ENCODE measurements at regions of chr20 and their contacts with region 1.

Region 1: GRCh38 chr20:62386383-62387218 is at the start of gene RPS21:
- DNase-seq: peak; percentile 98
- H3K4me3 Mint-ChIP-seq: peak within 1 kb of the TSS; percentile 96
- H3K27ac Mint-ChIP-seq: peak within 1 kb of the TSS; percentile 92
- H3K4me1 Mint-ChIP-seq: peaks cover 63% of the 10 kb centered on the region
- H3K27me3 Mint-ChIP-seq: no peaks in the 10 kb centered on the region
- CTCF ChIP-seq: no peak
- total RNA-seq, gene RPS21: 1,920 and 1,936 TPM in 2 replicates

Region 2: DNA sequence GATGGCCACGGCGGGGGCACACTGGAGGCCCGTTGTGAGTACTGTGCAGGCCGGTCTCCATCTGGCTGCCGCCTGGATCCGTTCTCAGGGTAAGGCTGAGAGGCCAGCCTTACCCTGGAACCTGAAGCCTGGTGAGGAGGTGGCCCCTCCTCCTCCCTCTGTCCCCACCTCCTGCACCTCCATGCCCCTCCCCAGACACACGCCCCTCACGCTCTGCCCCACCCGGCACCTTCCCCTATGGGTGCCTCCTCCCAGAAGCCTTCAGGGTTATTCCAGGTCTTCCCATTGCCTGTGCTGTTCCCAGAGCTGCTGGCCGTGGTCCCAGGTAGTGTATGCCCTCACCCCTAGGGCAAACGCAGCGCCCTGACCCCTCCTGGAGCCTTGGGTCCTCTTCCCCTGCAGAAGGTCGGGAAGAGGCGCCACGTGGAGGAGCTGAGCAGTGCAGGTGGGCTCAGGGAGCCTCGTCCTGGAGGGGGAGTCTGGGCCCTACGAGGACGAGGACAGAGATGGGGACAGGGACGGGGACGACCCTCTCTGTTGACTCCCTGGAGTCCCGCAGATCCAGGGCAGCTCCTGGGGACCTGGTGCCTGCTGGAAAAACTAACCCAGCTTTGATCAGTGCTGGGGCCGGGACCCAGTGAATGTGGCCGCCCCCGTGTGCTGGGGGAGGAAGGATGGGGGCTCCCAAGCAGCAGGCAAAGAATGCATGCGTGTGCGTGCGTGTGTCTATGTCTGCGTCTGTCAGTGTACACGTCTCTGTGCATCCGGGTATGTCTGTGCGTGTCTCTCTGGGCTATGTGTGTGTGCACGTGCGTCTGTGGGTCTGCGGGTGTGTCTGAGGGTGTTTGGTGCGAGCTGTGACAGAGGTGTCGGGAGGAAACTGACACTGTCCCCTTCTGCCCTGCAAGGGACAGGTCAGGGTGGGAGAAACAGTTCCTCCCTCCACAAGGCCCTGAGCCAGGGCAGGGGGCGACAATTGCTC is 158.3 kb before region 1 on chr20:
- CTCF ChIA-PET with region 1: no interaction called
- intact Hi-C with region 1: no loop called
- DNase-seq: peak; percentile 43
- H3K4me3 Mint-ChIP-seq: no peak overlapping the region
- H3K27ac Mint-ChIP-seq: no peak overlapping the region
- H3K4me1 Mint-ChIP-seq: peaks cover 15% of the 10 kb centered on the region
- H3K27me3 Mint-ChIP-seq: peaks cover 44% of the 10 kb centered on the region
- CTCF ChIP-seq: peak; percentile 27

Region 3: GRCh38 chr20:62302341-62303058 is 84.1 kb before region 1 on chr20 and contains the start of gene ADRM1:
- CTCF ChIA-PET with region 1: interaction called, 44 read pairs
- intact Hi-C with region 1: loop called (anchors 1 kb)
- DNase-seq: peak; percentile 100
- H3K4me3 Mint-ChIP-seq: peak within 1 kb of the TSS; percentile 84
- H3K27ac Mint-ChIP-seq: peak within 1 kb of the TSS; percentile 86
- H3K4me1 Mint-ChIP-seq: peaks cover 28% of the 10 kb centered on the region
- H3K27me3 Mint-ChIP-seq: no peaks in the 10 kb centered on the region
- CTCF ChIP-seq: peak; percentile 98
- total RNA-seq, gene ADRM1: 222 and 227 TPM in 2 replicates

Region 4: DNA sequence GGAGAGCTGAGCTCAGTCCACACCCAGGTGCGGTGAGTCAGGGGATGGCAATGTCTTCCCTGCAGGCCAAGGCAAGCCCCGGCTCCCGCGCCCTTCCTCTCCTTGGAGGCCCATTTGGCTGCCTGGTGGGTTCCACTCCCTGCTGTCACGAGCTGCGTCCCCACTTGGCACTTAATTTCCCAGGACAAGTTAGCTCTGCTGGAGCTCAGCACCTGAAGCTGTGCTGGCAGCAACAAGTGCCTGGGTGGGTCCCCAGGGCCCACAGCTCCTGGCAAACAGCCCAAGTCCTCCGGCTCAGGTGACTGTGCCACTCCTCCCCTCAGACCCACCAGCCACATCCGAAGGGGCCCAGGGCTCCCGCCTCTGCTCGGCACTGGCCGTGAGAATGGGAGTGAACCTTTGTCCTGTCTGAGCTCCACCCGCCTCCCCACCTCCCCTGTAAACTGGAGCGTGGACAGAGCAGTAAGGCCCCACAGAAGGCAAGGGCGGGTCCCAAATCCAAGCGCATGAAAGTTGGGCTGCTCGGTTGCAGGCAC is 36.4 kb before region 1 on chr20:
- CTCF ChIA-PET with region 1: interaction called, 20 read pairs
- intact Hi-C with region 1: no loop called
- DNase-seq: peak; percentile 98
- H3K4me3 Mint-ChIP-seq: peak overlapping the region; percentile 60
- H3K27ac Mint-ChIP-seq: peak overlapping the region; percentile 93
- H3K4me1 Mint-ChIP-seq: peaks cover 33% of the 10 kb centered on the region
- H3K27me3 Mint-ChIP-seq: no peaks in the 10 kb centered on the region
- CTCF ChIP-seq: no peak

Region 5: DNA sequence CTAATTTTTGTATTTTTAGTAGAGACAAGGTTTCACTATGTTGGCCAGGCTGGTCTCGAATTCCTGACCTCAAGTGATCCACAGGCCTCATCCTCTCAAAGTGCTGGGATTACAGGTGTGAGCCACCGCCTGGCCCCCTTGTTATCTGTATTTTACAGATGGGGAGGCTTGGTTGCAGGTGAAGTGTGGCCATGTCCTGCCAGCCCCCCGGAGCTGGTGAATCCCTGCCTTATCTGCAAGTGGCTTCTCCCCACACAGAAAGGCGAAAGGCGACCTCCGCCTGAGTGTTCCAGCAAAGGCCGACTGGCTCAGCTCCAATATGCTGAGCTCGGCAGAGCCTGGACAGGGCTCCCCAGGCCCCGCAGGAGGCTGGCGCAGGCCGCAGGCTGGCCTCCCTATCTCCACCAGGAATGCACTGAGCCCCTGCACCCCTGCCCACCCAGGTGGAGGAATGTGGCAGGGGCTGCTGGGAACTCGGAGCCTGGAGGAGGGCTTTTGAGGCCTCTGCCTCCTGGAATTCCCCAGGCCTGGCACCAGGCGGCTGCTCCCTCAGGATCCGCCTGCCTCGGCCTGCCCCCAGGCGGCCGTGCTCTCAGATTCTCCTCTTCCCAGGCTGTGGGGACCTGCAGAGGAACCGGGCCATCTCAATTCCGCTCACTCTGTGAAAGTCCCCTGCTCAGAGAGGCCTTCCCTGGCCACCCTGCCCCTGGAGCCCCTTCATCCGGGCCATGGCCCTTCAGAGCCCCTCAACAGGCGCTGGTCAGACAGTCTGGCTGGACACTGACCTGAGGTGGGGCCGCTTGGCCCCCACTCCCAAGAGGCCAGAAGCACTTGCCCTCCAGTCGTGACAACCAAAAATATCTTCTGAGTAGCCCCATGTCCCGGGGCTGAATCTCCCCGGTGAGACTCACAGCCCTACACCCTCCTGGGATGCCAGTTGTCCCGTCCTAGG is 10.2 kb before region 1 on chr20:
- CTCF ChIA-PET with region 1: interaction called, 22 read pairs
- intact Hi-C with region 1: no loop called
- DNase-seq: peak; percentile 82
- H3K4me3 Mint-ChIP-seq: no peak overlapping the region
- H3K27ac Mint-ChIP-seq: no peak overlapping the region
- H3K4me1 Mint-ChIP-seq: peaks cover 15% of the 10 kb centered on the region
- H3K27me3 Mint-ChIP-seq: no peaks in the 10 kb centered on the region
- CTCF ChIP-seq: peak; percentile 68

Region 6: DNA sequence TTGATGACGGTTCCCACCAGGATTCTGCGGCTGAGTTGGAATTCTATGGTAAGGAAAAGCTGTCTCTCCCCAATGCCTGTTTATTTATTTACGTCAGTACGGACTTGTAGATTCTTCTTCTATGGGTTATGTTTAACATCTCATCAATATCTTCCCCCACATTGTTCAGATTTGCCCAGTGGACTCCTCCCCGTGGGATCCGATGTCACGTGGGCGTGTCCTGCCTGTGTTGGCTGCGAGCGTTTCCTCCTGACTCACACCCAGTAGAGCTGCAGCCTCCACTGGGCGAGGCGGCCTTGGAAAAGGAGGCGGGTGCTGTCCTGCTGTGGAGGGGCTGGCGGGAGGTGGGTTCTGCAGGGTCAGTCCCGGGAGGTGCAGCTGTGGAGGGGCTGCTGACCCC is 208.9 kb after region 1 on chr20:
- CTCF ChIA-PET with region 1: no interaction called
- intact Hi-C with region 1: no loop called
- DNase-seq: peak; percentile 83
- H3K4me3 Mint-ChIP-seq: peak overlapping the region; percentile 18
- H3K27ac Mint-ChIP-seq: no peak overlapping the region
- H3K4me1 Mint-ChIP-seq: peaks cover 22% of the 10 kb centered on the region
- H3K27me3 Mint-ChIP-seq: peaks cover 60% of the 10 kb centered on the region
- CTCF ChIP-seq: no peak

Region 7: GRCh38 chr20:62616728-62617621 is 230.4 kb after region 1 on chr20:
- CTCF ChIA-PET with region 1: interaction called, 4 read pairs
- intact Hi-C with region 1: loop called (anchors 5 kb)
- DNase-seq: peak; percentile 92
- H3K4me3 Mint-ChIP-seq: no peak overlapping the region
- H3K27ac Mint-ChIP-seq: peak overlapping the region; percentile 19
- H3K4me1 Mint-ChIP-seq: peaks cover 29% of the 10 kb centered on the region
- H3K27me3 Mint-ChIP-seq: peaks cover 42% of the 10 kb centered on the region
- CTCF ChIP-seq: peak; percentile 99